PC-3 (cell line): ENCODE measurements at regions of chr22 and their contacts with region 1.

Region 1: GRCh38 chr22:17213976-17214375 is 5.3 kb downstream of the ADA2 start:
- DNase-seq: peak; percentile 19
- ATAC-seq: no peak
- H3K4me3 ChIP-seq: no peak overlapping the region
- H3K27ac ChIP-seq: no peak overlapping the region
- H3K4me1 ChIP-seq: no peaks in the 10 kb centered on the region
- H3K27me3 ChIP-seq: peaks cover 3% of the 10 kb centered on the region; the same call in 1 of the 2 replicates
- CTCF ChIP-seq: peak; percentile 26; the same call in 1 of the 2 replicates

Region 2: DNA sequence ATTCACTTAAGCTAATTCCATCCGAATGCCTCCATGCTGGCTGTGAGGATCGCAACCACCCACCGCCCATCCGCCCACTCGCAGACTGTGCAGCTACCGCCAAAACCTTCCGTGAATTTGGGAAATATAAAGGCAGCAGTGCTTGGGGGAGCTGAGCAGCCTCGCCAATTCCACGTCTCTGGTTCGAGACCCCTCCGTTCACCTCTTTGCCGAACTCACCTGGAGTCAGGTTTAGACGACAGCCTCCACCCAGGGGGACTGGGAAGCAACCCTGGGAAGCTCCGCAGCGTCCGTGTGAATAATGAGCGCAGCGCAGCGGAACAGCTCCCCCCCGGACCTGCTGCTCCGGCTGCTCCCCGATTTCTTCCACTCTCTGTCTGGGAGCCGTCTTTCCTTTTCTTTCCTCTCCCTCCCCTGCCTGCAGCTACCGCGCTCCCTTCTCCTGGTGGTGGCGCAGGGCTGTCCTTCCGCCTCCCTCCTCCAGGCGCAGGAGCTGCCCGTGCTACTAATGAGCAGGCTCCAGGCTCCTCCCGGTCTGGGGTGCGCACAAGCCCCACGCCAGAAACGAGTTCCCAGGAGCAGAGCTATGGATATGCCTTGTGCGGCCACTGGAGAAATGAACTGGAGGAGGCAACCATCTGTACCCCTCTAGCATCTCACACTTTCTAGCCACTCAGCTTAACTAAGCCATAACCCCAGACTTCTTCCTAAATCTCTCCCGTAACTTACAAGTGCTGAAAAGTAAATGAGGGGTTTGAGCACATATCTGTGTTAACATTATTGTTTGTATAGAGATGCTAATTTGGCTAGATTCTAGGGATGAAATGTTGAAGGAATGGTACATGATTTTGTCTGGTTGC is 496.0 kb before region 1 on chr22:
- CTCF ChIA-PET with region 1: no interaction called
- POLR2A ChIA-PET with region 1: no interaction called
- intact Hi-C with region 1: no loop called
- DNase-seq: no peak
- ATAC-seq: no peak
- H3K4me3 ChIP-seq: no peak overlapping the region
- H3K27ac ChIP-seq: no peak overlapping the region
- H3K4me1 ChIP-seq: no peaks in the 10 kb centered on the region
- H3K27me3 ChIP-seq: no peaks in the 10 kb centered on the region
- CTCF ChIP-seq: no peak

Region 3: GRCh38 chr22:17063411-17064106 is 150.4 kb before region 1 on chr22:
- CTCF ChIA-PET with region 1: no interaction called
- POLR2A ChIA-PET with region 1: no interaction called
- intact Hi-C with region 1: no loop called
- DNase-seq: no peak
- ATAC-seq: no peak
- H3K4me3 ChIP-seq: no peak overlapping the region
- H3K27ac ChIP-seq: no peak overlapping the region
- H3K4me1 ChIP-seq: no peaks in the 10 kb centered on the region
- H3K27me3 ChIP-seq: peaks cover 20% of the 10 kb centered on the region; the same call in 1 of the 2 replicates
- CTCF ChIP-seq: no peak

Region 4: DNA sequence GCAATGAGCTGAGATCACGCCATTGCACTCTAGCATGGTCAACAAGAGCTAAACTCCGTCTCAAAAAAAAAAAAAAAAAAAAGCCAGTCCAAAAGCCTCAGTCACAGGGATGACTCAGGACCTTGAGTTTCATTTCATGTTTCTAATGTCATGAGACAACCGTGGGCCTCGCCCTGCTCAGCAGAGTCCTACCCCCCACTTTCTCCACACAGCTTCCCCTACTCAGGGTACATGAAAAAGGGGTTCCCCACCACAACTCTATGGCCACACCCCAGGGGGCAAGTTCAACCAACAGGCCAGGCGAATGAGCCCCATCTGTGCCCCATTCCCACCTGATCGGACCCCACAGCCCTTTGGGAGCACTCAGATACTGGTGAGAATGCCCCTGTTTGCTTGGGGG is 29.5 kb after region 1 on chr22:
- CTCF ChIA-PET with region 1: no interaction called
- POLR2A ChIA-PET with region 1: no interaction called
- intact Hi-C with region 1: no loop called
- DNase-seq: peak; percentile 12
- ATAC-seq: no peak
- H3K4me3 ChIP-seq: no peak overlapping the region
- H3K27ac ChIP-seq: no peak overlapping the region
- H3K4me1 ChIP-seq: no peaks in the 10 kb centered on the region
- H3K27me3 ChIP-seq: peaks cover 8% of the 10 kb centered on the region
- CTCF ChIP-seq: no peak

Region 5: GRCh38 chr22:17314487-17314886 is 100.5 kb after region 1 on chr22:
- CTCF ChIA-PET with region 1: no interaction called
- POLR2A ChIA-PET with region 1: no interaction called
- intact Hi-C with region 1: no loop called
- DNase-seq: no peak
- ATAC-seq: no peak
- H3K4me3 ChIP-seq: no peak overlapping the region
- H3K27ac ChIP-seq: no peak overlapping the region
- H3K4me1 ChIP-seq: no peaks in the 10 kb centered on the region
- H3K27me3 ChIP-seq: peaks cover 40% of the 10 kb centered on the region
- CTCF ChIP-seq: no peak

Region 6: GRCh38 chr22:17368554-17369438 is 154.8 kb after region 1 on chr22:
- CTCF ChIA-PET with region 1: no interaction called
- POLR2A ChIA-PET with region 1: no interaction called
- intact Hi-C with region 1: loop called (anchors 10 kb)
- DNase-seq: no peak
- ATAC-seq: no peak
- H3K4me3 ChIP-seq: no peak overlapping the region
- H3K27ac ChIP-seq: no peak overlapping the region
- H3K4me1 ChIP-seq: no peaks in the 10 kb centered on the region
- H3K27me3 ChIP-seq: peaks cover 67% of the 10 kb centered on the region
- CTCF ChIP-seq: no peak